ENCODE measurements at regions of chr20 and their contacts with region 1.

Region 1: GRCh38 chr20:33791959-33792597 is 19.1 kb upstream of the CHMP4B start:
- H3K4me3 Mint-ChIP-seq: no peak overlapping the region
- H3K27ac Mint-ChIP-seq: no peak overlapping the region
- H3K4me1 Mint-ChIP-seq: peaks cover 17% of the 10 kb centered on the region
- H3K27me3 Mint-ChIP-seq: no peaks in the 10 kb centered on the region

Region 2: GRCh38 chr20:33843854-33844253 is 51.8 kb after region 1 on chr20:
- intact Hi-C with region 1: loop called (anchors 10 kb)
- H3K4me3 Mint-ChIP-seq: no peak overlapping the region
- H3K27ac Mint-ChIP-seq: no peak overlapping the region
- H3K4me1 Mint-ChIP-seq: peaks cover 83% of the 10 kb centered on the region
- H3K27me3 Mint-ChIP-seq: no peaks in the 10 kb centered on the region

Region 3: GRCh38 chr20:33999025-33999649 is 207.1 kb after region 1 on chr20:
- intact Hi-C with region 1: no loop called
- H3K4me3 Mint-ChIP-seq: no peak overlapping the region
- H3K27ac Mint-ChIP-seq: no peak overlapping the region
- H3K4me1 Mint-ChIP-seq: peaks cover 82% of the 10 kb centered on the region
- H3K27me3 Mint-ChIP-seq: no peaks in the 10 kb centered on the region

Measured in dendritic cell treated with granulocyte-macrophage colony-stimulating factor and Interleukin-4, amounts not matched to agents 40 ng/mL and 50 ng/mL, for 4 days (primary cell).